OCI-LY7 (cell line): ENCODE measurements at regions of chr13 and their contacts with region 1.

Region 1: GRCh38 chr13:114037674-114038073 is 63.8 kb upstream of the C13orf46 start:
- DNase-seq: no peak
- H3K4me3 ChIP-seq: no peak overlapping the region
- H3K27ac ChIP-seq: no peak overlapping the region
- H3K4me1 ChIP-seq: peaks cover under 1% of the 10 kb centered on the region
- CTCF ChIP-seq: no peak

Region 2: DNA sequence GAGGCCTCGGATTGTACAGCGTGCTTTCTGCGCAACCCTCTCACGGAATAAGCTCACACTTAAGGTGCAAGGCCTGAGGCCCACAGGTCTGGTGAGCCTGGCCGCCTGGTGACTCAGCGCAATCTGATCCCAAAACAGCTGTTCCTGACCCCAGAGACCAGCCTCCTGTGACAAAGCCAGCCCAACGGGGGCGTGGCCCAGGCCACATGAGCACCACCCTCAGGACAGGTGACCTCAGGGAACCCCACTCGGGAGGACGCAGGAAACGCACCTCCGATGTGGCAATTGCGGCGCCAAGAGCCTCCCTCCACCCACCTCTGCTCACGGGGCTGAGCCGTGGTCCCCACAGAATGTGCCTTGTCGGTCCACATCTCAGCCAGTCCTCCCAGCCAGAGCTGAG is 700.1 kb before region 1 on chr13:
- CTCF ChIA-PET with region 1: no interaction called
- POLR2A ChIA-PET with region 1: no interaction called
- intact Hi-C with region 1: no loop called
- DNase-seq: no peak
- H3K4me3 ChIP-seq: no peak overlapping the region
- H3K27ac ChIP-seq: no peak overlapping the region
- H3K4me1 ChIP-seq: no peaks in the 10 kb centered on the region
- CTCF ChIP-seq: no peak

Region 3: DNA sequence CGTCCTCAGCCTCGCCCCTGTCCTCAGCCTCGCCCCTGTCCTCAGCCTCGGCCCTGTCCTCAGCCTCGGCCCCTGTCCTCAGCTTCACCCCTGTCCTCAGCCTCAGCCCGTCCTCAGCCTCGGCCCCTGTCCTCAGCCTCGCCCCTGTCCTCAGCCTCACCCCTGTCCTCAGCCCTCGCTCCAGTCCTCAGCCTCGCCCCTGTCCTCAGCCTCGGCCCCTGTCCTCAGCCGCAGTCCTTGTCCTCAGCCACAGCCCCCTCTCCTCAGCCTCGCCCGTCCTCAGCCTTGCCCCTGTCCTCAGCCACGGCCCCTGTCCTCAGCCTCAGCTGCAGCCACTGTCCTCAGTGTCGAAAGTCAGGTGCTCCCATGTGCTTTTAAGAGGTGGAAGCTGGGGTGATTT is 74.3 kb before region 1 on chr13:
- CTCF ChIA-PET with region 1: interaction called, 15 read pairs
- POLR2A ChIA-PET with region 1: no interaction called
- intact Hi-C with region 1: no loop called
- DNase-seq: no peak
- H3K4me3 ChIP-seq: no peak overlapping the region
- H3K27ac ChIP-seq: no peak overlapping the region
- H3K4me1 ChIP-seq: no peaks in the 10 kb centered on the region
- CTCF ChIP-seq: no peak